ENCODE measurements at regions of chr9 and their contacts with region 1.

Region 1: GRCh38 chr9:38432922-38433510 is 8.8 kb upstream of the IGFBPL1 start:
- DNase-seq: peak; percentile 58 to 75 (median 66)
- H3K4me3 ChIP-seq: no peak overlapping the region
- H3K27ac ChIP-seq: no peak overlapping the region
- H3K4me1 ChIP-seq: peaks cover 8 to 36% (median 27%) of the 10 kb centered on the region in 4 experiments
- H3K27me3 ChIP-seq: no peaks in the 10 kb centered on the region

Region 2: GRCh38 chr9:38107811-38108304 is 325.2 kb before region 1 on chr9:
- CTCF ChIA-PET with region 1: no interaction called
- POLR2A ChIA-PET with region 1: no interaction called
- DNase-seq: no peak
- H3K4me3 ChIP-seq: no peak overlapping the region
- H3K27ac ChIP-seq: no peak overlapping the region
- H3K4me1 ChIP-seq: no peaks in the 10 kb centered on the region
- H3K27me3 ChIP-seq: no peaks in the 10 kb centered on the region

Region 3: DNA sequence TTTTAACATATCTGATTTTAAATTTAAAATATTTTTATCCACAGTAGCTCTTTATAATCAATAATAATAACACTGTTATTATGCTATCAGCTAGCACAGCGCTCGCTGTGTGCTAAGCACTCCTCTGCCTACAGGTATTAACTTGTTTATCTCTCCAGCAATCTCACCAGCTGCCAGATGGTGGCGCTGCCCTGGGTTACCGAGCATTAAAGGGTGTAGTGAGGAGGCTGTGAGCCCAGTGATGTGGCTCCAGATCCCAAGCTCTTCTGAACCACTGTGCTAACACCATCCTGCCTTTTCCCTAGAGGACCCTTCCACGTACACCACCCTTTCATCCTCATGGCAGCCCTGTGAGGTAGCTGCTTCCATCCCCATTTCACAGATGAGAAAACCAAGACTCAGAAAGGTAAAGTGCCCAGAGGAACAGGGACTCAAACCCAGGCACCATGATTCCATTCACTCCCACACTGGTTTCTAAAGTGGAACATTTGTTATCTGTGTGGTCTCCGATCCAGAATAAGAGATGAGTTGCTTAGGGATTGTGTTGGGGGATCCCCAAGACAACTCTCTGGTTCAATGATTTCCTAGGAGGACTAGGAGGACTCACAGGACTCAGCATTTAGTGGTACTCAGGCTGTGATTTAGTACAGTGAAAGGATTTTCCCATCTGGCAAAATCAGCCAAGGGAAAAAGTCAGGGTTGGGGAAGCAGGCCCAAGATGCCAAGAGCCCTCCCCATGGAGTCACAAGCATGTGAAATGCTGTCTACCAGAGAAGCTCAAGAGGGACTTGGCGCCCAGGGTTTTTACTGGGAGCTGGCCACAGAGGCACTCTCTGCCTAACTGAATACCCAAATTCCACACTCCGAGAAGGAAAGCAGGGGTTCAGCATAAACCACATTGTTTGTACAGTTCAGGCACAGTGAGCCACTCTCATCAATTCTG is 15.7 kb before region 1 on chr9:
- CTCF ChIA-PET with region 1: interaction called, 83 read pairs
- POLR2A ChIA-PET with region 1: no interaction called
- DNase-seq: peak; percentile 35 to 63 (median 58)
- H3K4me3 ChIP-seq: no peak overlapping the region
- H3K27ac ChIP-seq: no peak overlapping the region
- H3K4me1 ChIP-seq: no peaks in the 10 kb centered on the region
- H3K27me3 ChIP-seq: peaks cover 0 to 12% (median 6%) of the 10 kb centered on the region in 5 experiments

Region 4: GRCh38 chr9:38443181-38443580 is 10.2 kb after region 1 on chr9:
- CTCF ChIA-PET with region 1: interaction called, 16 read pairs
- POLR2A ChIA-PET with region 1: no interaction called
- DNase-seq: no peak
- H3K4me3 ChIP-seq: no peak overlapping the region
- H3K27ac ChIP-seq: no peak overlapping the region
- H3K4me1 ChIP-seq: peaks cover 0 to 23% (median 17%) of the 10 kb centered on the region in 4 experiments
- H3K27me3 ChIP-seq: no peaks in the 10 kb centered on the region